ENCODE measurements at regions of chr17 and their contacts with region 1.

Region 1: GRCh38 chr17:76816590-76817135 is 51.5 kb upstream of the MGAT5B start:
- DNase-seq: peak; percentile 29
- H3K4me3 ChIP-seq: no peak overlapping the region
- H3K27ac ChIP-seq: no peak overlapping the region
- H3K4me1 ChIP-seq: no peaks in the 10 kb centered on the region
- H3K27me3 ChIP-seq: no peaks in the 10 kb centered on the region
- CTCF ChIP-seq: peak; percentile 71 to 76

Region 2: DNA sequence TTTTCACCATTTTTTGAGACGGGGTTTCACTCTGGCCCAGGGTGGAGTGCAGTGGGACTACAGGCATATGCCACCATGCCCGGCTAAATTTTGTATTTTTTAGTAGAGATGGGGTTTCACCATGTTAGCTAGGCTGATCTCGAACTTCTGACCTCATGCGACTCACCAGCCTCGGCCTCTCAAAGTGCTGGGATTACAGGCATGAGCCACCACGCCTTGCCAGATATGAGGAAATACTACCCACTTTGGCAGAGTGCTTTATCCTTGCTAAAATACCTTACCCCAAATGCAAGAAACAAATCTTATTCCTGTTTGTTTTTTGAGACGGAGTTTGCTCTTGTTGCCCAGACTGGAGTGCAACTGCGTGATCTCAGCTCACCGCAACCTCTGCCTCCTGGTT is 11.3 kb before region 1 on chr17:
- CTCF ChIA-PET with region 1: interaction called, 11 read pairs
- dilution Hi-C with region 1: no loop called
- in situ Hi-C with region 1: no loop called
- intact Hi-C with region 1: no loop called
- DNase-seq: peak; percentile 53
- H3K4me3 ChIP-seq: no peak overlapping the region
- H3K27ac ChIP-seq: no peak overlapping the region
- H3K4me1 ChIP-seq: no peaks in the 10 kb centered on the region
- H3K27me3 ChIP-seq: peaks cover 2% of the 10 kb centered on the region
- CTCF ChIP-seq: no peak

Region 3: GRCh38 chr17:77054936-77055335 is 238.3 kb after region 1 on chr17:
- CTCF ChIA-PET with region 1: interaction called, 17 read pairs
- dilution Hi-C with region 1: no loop called
- in situ Hi-C with region 1: no loop called
- intact Hi-C with region 1: loop called (anchors 1 kb)
- DNase-seq: no peak
- H3K4me3 ChIP-seq: no peak overlapping the region
- H3K27ac ChIP-seq: no peak overlapping the region
- H3K4me1 ChIP-seq: no peaks in the 10 kb centered on the region
- H3K27me3 ChIP-seq: no peaks in the 10 kb centered on the region
- CTCF ChIP-seq: no peak

Region 4: DNA sequence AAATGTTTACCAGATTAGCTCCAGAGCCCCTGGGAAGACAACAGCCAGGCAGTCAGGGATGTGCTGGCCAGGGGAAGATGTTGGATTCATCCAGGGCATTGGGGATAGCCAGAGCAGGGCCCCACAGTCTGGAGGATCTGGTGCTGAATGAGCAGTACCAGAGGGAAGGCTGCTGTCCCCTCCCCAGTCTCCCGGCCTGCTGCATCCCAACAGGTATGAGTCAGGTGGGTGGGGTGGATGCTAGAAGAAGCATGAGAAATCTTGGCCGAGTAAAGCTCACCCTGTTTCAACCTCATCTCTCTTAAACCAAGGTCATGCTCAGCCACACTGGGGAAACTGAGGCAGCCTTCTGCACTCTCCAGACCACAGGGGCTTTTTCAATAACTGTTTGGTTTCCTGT is 252.3 kb after region 1 on chr17:
- CTCF ChIA-PET with region 1: no interaction called
- dilution Hi-C with region 1: no loop called
- in situ Hi-C with region 1: no loop called
- intact Hi-C with region 1: loop called (anchors 2 kb)
- DNase-seq: peak; percentile 54
- H3K4me3 ChIP-seq: no peak overlapping the region
- H3K27ac ChIP-seq: no peak overlapping the region
- H3K4me1 ChIP-seq: peaks cover 9% of the 10 kb centered on the region
- H3K27me3 ChIP-seq: peaks cover 5% of the 10 kb centered on the region
- CTCF ChIP-seq: no peak

Measured in mammary epithelial cell (primary cell).